Gastrocnemius medialis (tissue), 4 donors: ENCODE measurements at regions of chr15 and their contacts with region 1.

Region 1: DNA sequence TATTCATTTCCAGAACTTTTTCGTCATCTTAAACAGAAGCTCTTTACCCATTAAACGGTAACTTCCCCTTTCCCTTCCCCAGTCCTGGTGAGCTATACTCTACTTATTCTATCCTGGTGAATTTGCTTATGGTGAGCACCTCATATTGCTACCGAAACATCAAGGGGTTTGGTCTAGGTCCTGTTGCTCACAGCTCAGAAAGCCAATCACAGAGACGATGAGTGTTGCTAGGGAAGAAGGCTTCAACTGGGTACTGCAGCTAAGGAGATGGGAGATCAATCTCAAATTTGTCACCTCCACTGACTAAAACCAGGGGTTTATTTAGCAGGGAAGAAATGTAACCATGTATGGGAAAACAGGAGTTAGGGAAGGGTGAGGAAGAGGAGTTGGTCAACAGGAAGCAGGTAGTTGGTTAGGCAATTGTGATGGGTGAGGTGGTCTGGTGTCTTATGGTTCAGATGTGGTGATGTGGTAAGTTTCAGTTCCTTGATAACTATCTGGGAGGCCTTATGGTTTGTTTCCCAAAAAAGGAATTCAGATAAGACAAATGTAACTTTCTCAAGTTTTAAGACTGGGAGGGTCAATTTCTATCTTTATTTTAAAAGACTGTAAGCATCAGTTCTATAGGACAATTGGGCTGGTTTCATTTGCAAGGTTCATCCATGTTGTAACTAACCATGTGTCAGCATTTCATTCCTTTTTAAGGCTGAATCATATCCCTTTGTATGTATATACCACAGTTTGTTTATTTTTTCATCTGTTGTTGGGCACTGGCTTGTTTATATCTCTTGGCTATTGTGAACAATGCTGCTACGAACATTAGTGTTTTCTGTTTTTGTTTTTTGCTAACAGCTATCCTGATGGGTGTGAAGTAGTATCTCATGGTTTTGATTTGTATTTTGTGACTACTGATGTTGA is 24.3 kb downstream of the ARHGAP11B start:
- DNase-seq: no peak
- ATAC-seq: no peak
- H3K4me3 ChIP-seq: no peak overlapping the region
- H3K27ac ChIP-seq: no peak overlapping the region
- H3K4me1 ChIP-seq: no peaks in the 10 kb centered on the region
- H3K27me3 ChIP-seq: no peaks in the 10 kb centered on the region
- CTCF ChIP-seq: no peak
- POLR2A ChIP-seq: no peak

Region 2: GRCh38 chr15:30770759-30771158 is 120.5 kb after region 1 on chr15:
- in situ Hi-C with region 1: loop called in 2 of 4 experiments (anchors 25 kb)
- intact Hi-C with region 1: no loop called
- DNase-seq: no peak
- ATAC-seq: no peak
- H3K4me3 ChIP-seq: no peak overlapping the region
- H3K27ac ChIP-seq: no peak overlapping the region
- H3K4me1 ChIP-seq: no peaks in the 10 kb centered on the region
- H3K27me3 ChIP-seq: no peaks in the 10 kb centered on the region
- CTCF ChIP-seq: no peak
- POLR2A ChIP-seq: no peak

Region 3: GRCh38 chr15:31101262-31102038 is 451.2 kb after region 1 on chr15 and contains the start of gene TRPM1:
- in situ Hi-C with region 1: loop called in 1 of 4 experiments (anchors 25 kb)
- intact Hi-C with region 1: no loop called
- DNase-seq: no peak
- ATAC-seq: no peak
- H3K4me3 ChIP-seq: no peak within 1 kb of the TSS
- H3K27ac ChIP-seq: no peak within 1 kb of the TSS
- H3K4me1 ChIP-seq: no peaks in the 10 kb centered on the region
- H3K27me3 ChIP-seq: no peaks in the 10 kb centered on the region
- CTCF ChIP-seq: no peak
- POLR2A ChIP-seq: no peak
- total RNA-seq, gene TRPM1: not detected

Region 4: DNA sequence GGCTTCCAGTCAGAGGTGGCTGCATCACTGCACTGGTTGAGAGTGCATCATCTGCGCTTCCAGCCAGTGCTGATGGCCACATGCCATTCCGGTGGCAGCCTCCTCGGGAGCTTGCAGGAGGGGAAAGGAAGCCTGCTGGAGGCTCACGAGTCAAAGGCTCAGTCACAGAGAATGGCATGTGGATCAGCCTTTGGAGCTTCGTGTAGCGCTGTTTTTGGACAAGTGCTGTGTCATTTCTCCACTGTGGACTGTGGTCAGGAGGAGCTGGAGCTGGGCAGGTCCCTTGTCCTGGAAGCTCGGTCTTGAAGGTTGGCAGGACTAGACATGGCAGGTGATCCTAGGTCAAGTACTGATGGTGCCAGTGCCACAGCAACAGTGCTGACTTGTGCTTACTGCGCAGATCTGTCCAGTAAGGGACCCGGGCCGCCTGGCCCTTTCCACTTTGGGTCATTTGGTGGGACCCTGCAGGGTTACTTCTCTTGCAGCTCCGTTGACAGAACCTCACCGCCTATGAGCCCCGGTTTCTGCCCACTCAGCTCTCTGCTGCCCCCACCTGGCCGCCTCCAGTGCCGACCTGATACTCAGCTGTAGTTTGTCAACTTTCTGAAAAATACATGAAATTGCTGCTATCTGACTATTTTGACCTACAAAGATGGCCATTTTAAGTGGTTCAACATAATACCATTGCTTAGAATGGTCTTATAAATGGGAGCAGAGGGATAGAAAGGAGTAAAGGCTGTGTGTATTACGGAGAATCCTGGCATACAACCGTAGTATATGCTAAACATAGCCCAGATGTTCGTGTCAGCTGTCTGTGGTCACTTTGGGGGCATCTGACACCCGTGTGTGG is 478.9 kb after region 1 on chr15:
- in situ Hi-C with region 1: loop called in 2 of 4 experiments (anchors 25 kb)
- intact Hi-C with region 1: no loop called
- DNase-seq: peak; percentile 38 to 54
- ATAC-seq: peak; percentile 92 to 94
- H3K4me3 ChIP-seq: peak overlapping the region in 3 of 4 donors; percentile 2 to 17 (median 3)
- H3K27ac ChIP-seq: no peak overlapping the region
- H3K4me1 ChIP-seq: peaks cover 8 to 9% of the 10 kb centered on the region in 2 donors
- H3K27me3 ChIP-seq: no peaks in the 10 kb centered on the region
- CTCF ChIP-seq: peak; percentile 79 to 98 (median 86)
- POLR2A ChIP-seq: no peak

Region 5: DNA sequence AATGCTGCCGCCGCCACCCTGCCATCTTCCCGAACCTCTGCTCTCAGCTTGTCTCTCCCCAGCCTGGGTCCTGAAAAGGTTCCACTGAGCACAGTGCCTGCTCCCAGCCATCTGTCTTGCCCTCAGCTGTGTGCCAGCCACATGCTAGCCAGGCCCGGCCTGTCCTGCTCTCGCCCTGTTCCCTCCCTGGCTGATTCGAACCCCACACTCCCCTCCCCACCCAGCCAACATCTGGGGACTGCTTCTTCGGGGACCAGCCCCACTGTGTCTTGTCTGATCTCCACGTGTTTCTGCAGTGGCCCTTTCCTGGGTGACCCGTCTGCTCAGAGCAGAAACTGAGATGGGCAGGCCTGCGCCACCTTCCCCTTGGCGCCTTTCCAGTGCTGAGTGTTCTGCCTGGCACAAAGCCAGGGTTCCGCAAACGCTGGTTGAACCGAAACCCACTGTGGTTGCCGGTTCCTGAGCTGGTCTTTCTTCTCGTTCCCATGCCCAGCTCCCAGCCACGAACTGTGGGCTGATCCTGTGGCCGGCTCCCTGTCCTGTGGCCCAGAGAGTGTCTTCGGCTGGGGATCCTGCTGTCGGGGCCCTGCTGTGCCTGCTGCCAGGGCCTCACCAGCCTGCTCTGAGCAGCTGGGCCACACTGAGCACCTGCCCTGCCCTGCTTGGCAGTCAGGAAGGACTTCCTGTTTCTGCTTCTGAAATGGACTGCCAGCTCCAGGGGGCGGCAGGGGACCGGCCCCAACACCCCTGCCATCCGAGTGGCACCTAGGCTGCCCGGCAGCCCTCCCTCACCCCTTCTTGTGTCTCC is 613.7 kb after region 1 on chr15:
- in situ Hi-C with region 1: no loop called
- intact Hi-C with region 1: no loop called
- DNase-seq: peak; percentile 44 to 58
- ATAC-seq: peak; percentile 36 to 70
- H3K4me3 ChIP-seq: peak overlapping the region in 1 of 4 donors; percentile 19
- H3K27ac ChIP-seq: peak overlapping the region; percentile 21 to 71 (median 60)
- H3K4me1 ChIP-seq: peaks cover 15 to 26% of the 10 kb centered on the region in 2 donors
- H3K27me3 ChIP-seq: no peaks in the 10 kb centered on the region
- CTCF ChIP-seq: no peak
- POLR2A ChIP-seq: no peak